Activated naive CD4-positive, alpha-beta T cell treated with anti-CD3 and anti-CD28 coated beads for 36 hours (primary cell): ENCODE measurements at regions of chr9 and their contacts with region 1.

Region 1: GRCh38 chr9:15277400-15278090 is 29.5 kb downstream of the TTC39B start:
- DNase-seq: no peak
- H3K4me3 Mint-ChIP-seq: no peak overlapping the region
- H3K27ac Mint-ChIP-seq: no peak overlapping the region
- H3K4me1 Mint-ChIP-seq: peaks cover 39% of the 10 kb centered on the region
- H3K27me3 Mint-ChIP-seq: no peaks in the 10 kb centered on the region

Region 2: DNA sequence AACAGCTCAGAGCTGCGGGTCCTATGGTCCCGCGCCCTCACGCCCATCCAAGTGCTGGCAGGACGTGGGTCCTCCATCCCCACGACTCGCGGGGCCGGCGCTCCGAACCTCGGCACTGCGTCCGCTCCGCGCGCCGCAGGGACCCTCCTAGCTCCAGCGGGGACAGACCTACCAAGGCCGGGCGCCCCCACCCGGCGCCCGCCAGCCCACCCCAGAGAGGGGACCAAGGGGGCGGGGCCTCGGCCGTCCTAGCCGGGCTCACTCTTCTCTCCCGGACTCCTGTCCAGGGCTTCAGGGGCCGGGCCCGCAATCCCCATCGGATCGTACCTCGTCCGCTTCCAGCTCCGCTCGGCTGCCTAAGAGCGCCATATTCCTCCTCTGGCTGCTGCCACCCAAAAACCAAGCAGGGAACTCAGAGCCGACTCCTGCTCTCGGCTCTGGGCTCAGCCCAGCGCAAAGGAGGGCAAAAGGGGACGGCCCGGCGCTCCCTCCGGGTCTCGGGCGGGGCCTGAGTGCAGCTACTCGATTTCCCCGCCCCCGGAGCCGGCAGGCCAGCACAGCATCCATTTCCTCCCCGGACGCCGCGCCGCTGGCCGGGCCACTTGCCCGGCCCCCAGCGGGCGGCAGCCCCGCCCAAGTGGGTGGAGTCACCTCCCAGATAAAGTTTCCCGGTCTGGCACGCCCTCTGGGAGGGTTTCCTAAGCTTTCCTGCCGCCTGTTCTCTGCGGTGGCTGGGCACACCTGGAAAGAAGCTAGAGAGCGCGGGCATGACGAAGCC is 29.4 kb after region 1 on chr9 and contains the start of gene TTC39B:
- CTCF ChIA-PET with region 1: interaction called, 8 read pairs
- intact Hi-C with region 1: loop called (anchors 1 kb)
- DNase-seq: peak; percentile 86
- H3K4me3 Mint-ChIP-seq: peak within 1 kb of the TSS; percentile 99
- H3K27ac Mint-ChIP-seq: peak within 1 kb of the TSS; percentile 95
- H3K4me1 Mint-ChIP-seq: peaks cover 57% of the 10 kb centered on the region
- H3K27me3 Mint-ChIP-seq: no peaks in the 10 kb centered on the region
- total RNA-seq, gene TTC39B: 43.9 to 46.4 TPM

Region 3: DNA sequence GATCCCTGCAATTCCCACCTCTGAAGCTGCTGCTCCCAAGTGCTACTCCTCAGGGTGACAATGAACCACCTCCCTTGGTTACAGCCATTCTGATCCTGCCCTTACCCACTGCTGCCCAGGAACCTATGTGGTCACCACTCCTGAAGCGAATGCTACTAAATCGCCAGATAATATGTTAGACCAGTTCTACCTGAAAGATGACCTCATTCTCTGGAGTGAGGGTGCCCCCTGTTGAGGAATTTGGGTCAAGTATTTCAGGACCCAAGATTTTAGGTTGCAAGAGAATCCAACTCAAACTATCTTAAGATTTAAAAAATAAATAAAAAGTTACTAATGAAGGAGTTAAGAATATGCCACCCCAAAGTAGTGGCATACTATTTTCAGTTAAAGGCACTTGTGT is 139.3 kb after region 1 on chr9:
- CTCF ChIA-PET with region 1: interaction called, 4 read pairs
- intact Hi-C with region 1: loop called (anchors 1 kb)
- DNase-seq: peak; percentile 67
- H3K4me3 Mint-ChIP-seq: no peak overlapping the region
- H3K27ac Mint-ChIP-seq: no peak overlapping the region
- H3K4me1 Mint-ChIP-seq: no peaks in the 10 kb centered on the region
- H3K27me3 Mint-ChIP-seq: no peaks in the 10 kb centered on the region

Region 4: GRCh38 chr9:15485836-15486666 is 208.5 kb after region 1 on chr9:
- CTCF ChIA-PET with region 1: no interaction called
- intact Hi-C with region 1: loop called (anchors 1 kb)
- DNase-seq: no peak
- H3K4me3 Mint-ChIP-seq: no peak overlapping the region
- H3K27ac Mint-ChIP-seq: peak overlapping the region; percentile 80
- H3K4me1 Mint-ChIP-seq: peaks cover 47% of the 10 kb centered on the region
- H3K27me3 Mint-ChIP-seq: no peaks in the 10 kb centered on the region

Region 5: DNA sequence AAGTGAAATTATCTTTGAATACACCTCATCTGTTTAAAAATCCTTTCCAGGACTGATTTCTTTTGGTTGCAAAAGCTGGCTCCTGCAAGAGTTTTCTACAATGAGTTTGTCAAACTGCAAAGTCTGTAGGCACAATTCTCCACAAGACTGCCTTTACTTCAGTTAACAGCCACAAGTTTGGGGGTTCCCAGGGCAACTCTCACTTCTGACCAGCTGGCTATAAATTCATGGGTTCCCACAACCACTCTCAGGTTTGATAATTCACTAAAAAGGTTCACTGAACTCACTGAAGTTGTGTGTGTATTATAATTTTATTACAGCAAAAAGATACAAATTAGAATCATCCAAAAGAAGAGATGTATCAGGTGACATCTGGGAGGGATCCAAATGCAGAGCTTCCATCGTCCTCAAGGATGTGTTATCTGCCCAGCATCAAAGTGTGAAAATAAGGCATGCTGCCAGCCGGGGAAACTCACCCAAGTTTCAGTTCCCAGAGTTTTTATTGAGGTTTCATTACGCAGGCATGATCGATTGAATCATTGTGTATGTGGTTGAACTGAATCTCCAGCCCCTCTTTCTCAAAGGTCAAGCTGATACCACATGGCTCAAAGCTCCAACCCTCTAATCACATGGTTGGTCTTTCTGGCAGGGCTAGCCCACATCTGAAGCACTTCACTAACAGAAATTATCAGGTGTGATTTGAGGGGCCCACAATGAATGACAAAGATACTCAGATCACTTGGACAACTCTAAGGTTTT is 252.2 kb after region 1 on chr9:
- CTCF ChIA-PET with region 1: interaction called, 3 read pairs
- intact Hi-C with region 1: loop called (anchors 1 kb)
- DNase-seq: no peak
- H3K4me3 Mint-ChIP-seq: no peak overlapping the region
- H3K27ac Mint-ChIP-seq: no peak overlapping the region
- H3K4me1 Mint-ChIP-seq: peaks cover 11% of the 10 kb centered on the region
- H3K27me3 Mint-ChIP-seq: no peaks in the 10 kb centered on the region

Region 6: GRCh38 chr9:15606643-15607472 is 329.3 kb after region 1 on chr9:
- CTCF ChIA-PET with region 1: no interaction called
- intact Hi-C with region 1: loop called (anchors 1 kb)
- DNase-seq: no peak
- H3K4me3 Mint-ChIP-seq: no peak overlapping the region
- H3K27ac Mint-ChIP-seq: no peak overlapping the region
- H3K4me1 Mint-ChIP-seq: no peaks in the 10 kb centered on the region
- H3K27me3 Mint-ChIP-seq: no peaks in the 10 kb centered on the region